ENCODE measurements at regions of chr3 and their contacts with region 1.

Region 1: GRCh38 chr3:28840976-28841376 is 439.9 kb upstream of the RBMS3 start:
- DNase-seq: peak; percentile 61
- H3K4me3 Mint-ChIP-seq: peak overlapping the region; percentile 24
- H3K27ac Mint-ChIP-seq: peak overlapping the region; percentile 76
- H3K4me1 Mint-ChIP-seq: peaks cover 19% of the 10 kb centered on the region
- H3K27me3 Mint-ChIP-seq: no peaks in the 10 kb centered on the region

Region 2: GRCh38 chr3:28940530-28940929 is 99.6 kb after region 1 on chr3:
- intact Hi-C with region 1: loop called (anchors 2 kb)
- DNase-seq: peak; percentile 64
- H3K4me3 Mint-ChIP-seq: peak overlapping the region; percentile 72
- H3K27ac Mint-ChIP-seq: peak overlapping the region; percentile 77
- H3K4me1 Mint-ChIP-seq: peaks cover 32% of the 10 kb centered on the region
- H3K27me3 Mint-ChIP-seq: no peaks in the 10 kb centered on the region

Region 3: GRCh38 chr3:29026286-29026685 is 185.3 kb after region 1 on chr3:
- intact Hi-C with region 1: loop called (anchors 1 kb)
- DNase-seq: no peak
- H3K4me3 Mint-ChIP-seq: no peak overlapping the region
- H3K27ac Mint-ChIP-seq: peak overlapping the region; percentile 71
- H3K4me1 Mint-ChIP-seq: peaks cover 5% of the 10 kb centered on the region
- H3K27me3 Mint-ChIP-seq: no peaks in the 10 kb centered on the region

Region 4: GRCh38 chr3:29091599-29092189 is 250.7 kb after region 1 on chr3:
- intact Hi-C with region 1: loop called (anchors 2 kb)
- DNase-seq: no peak
- H3K4me3 Mint-ChIP-seq: no peak overlapping the region
- H3K27ac Mint-ChIP-seq: peak overlapping the region; percentile 52
- H3K4me1 Mint-ChIP-seq: peaks cover 2% of the 10 kb centered on the region
- H3K27me3 Mint-ChIP-seq: no peaks in the 10 kb centered on the region

Region 5: DNA sequence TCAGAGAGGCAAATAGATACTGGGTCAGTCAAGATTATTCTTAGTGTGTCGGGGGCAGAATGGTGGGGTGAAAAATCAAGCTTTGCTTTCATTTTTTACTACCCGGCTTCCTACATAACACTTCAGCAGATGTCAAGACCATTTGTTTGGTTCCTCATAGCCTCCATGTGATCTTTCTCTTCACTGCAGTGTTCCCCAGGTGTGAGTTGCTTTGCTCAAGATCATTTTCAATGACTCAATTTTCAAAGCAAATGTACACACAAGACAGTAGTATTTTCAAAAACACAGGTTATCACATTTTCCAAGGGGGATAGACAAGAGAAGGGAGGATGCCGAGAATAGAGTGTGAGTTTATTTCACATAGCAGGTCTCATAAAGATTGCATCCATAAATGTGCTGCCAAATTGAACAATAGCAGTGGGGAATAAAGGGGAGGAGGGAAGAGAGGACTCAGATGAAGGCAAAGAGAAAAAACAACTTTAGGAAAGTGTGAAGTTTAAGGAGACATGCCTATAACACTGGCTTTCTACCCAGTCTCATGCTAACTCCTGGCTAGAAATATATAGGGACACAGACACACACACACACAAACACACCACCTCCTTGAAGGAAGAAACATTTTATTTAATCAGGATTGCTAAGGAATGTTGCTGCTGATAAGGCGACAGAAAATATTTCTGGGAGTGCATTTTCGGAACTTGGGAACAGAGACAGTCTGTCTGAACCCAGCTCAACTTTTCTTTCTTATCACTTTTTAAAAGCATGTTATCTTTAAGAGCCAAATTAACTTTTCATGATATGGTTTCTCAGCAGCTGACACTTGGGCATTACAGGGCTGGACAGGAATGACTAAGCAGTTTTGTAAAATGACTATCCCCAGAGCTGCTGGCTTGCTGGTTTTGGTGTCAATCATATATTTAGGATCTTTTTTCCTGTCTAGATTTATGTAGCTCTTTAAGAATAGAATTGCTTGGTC is 842.3 kb after region 1 on chr3:
- intact Hi-C with region 1: loop called (anchors 5 kb)
- DNase-seq: no peak
- H3K4me3 Mint-ChIP-seq: no peak overlapping the region
- H3K27ac Mint-ChIP-seq: no peak overlapping the region
- H3K4me1 Mint-ChIP-seq: peaks cover 9% of the 10 kb centered on the region
- H3K27me3 Mint-ChIP-seq: peaks cover 6% of the 10 kb centered on the region